Activated CD4-positive, alpha-beta memory T cell treated with anti-CD3 and anti-CD28 coated beads for 36 hours (primary cell): ENCODE measurements at regions of chr10 and their contacts with region 1.

Region 1: DNA sequence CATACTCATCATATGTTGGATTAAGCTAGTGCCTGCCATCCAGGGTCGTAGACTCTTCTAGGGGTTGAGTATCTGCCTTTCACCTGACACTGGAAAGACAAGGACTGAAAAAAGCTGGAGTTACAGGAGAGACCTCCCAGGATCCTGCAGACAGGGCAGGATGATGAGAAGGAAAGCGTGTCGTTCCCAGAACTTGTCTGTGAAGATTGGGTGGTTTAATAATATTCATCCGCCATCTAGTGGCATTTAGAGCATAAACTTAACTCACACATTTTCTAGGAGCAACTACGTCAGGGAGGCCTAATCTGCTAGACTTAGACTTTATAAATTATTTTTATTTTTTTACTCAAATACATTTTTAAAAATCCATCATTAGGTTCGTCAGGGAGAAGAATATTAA is 59.6 kb downstream of the ADRB1 start:
- DNase-seq: no peak
- H3K4me3 Mint-ChIP-seq: no peak overlapping the region
- H3K27ac Mint-ChIP-seq: no peak overlapping the region
- H3K4me1 Mint-ChIP-seq: peaks cover 25% of the 10 kb centered on the region
- H3K27me3 Mint-ChIP-seq: peaks cover 26% of the 10 kb centered on the region

Region 2: DNA sequence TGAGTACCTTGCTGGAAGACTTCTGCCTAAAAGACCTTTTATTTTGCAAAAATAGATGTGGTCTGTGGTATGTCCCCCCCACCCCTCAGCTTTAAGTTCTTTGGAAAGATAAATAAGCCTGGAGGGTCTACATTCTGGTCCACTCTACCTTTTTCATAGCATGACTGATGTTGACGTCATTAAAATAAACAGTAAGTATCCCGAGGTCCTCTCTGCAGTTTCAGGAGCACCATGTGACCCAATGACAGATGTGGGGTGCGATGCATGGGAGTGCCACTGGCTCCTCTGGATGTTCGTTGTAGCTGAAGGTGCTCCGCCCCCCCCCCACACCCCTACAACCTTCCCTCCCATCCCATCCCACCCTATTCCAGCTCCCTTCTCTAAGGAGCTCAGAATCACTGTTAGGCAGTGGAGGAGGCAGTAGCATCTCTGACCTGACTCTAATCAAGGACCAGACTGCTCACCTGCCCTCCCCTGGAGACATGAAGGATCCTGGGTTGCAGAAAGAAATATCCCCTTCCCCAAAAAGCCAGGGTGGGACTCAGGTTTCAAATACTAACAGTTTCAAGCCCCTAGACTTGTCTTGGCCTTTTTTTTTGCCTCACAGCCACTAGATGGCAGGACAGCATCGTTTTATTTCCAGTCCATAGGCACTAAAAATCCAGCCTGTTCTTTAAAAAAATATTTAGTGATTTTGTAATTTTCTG is 398.5 kb before region 1 on chr10:
- CTCF ChIA-PET with region 1: interaction called, 8 read pairs
- POLR2A ChIA-PET with region 1: no interaction called
- intact Hi-C with region 1: loop called (anchors 1 kb)
- DNase-seq: peak; percentile 32
- H3K4me3 Mint-ChIP-seq: no peak overlapping the region
- H3K27ac Mint-ChIP-seq: no peak overlapping the region
- H3K4me1 Mint-ChIP-seq: peaks cover 27% of the 10 kb centered on the region
- H3K27me3 Mint-ChIP-seq: no peaks in the 10 kb centered on the region